ENCODE measurements at regions of chr2 and their contacts with region 1.

Region 1: DNA sequence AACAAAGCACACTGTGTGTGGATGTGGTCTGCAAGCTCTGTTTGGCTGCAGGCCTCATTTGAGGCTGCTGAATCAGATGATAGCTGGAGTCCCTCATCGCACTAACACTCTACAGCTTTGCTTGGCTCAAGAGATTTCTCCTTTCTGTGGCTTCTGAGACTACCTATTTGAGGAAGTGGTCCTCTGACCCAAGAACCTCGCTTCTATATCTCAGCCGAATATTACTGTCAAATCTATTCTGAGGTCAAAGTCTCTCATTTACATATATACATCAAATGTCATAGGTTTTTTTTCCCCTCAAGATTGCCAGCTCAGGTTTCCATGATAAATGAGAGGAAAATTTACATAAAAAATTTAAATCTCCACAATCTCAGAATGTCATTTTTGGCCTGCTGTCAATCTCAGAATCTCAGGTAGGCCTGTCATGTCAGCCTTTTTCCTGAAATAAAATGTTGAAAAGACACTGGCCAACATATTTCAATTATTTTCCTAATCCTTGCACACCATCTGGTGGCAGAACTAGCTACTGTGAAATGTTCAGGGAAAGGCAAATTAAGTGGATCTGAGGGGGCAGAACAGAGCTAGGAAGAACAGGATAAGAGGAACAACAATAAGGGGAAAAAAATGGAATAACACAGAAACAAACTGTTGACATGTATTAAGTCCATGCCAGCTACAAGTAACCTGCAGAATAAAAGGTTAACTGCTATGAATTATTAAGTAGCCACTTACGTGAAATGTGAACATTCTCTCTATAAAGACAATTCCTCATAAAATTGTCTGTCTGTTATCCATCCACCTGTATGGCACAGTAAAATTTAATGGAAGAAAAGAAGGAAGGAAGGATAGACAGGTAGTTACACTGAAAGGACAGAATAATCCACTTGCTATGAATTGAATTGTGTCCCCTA is 39.3 kb downstream of the AP1S3 start:
- DNase-seq: peak in 2 of 10 donors; percentile 7 to 12
- H3K4me3 ChIP-seq: no peak overlapping the region
- H3K27ac ChIP-seq: no peak overlapping the region
- H3K27me3 ChIP-seq: no peaks in the 10 kb centered on the region
- CTCF ChIP-seq: peak; percentile 55 to 87 (median 75)

Region 2: GRCh38 chr2:222976521-222977076 is 821.5 kb before region 1 on chr2:
- intact Hi-C with region 1: loop called (anchors 2 to 5 kb)
- DNase-seq: no peak
- H3K4me3 ChIP-seq: no peak overlapping the region
- H3K27ac ChIP-seq: no peak overlapping the region
- H3K27me3 ChIP-seq: no peaks in the 10 kb centered on the region
- CTCF ChIP-seq: no peak

Region 3: GRCh38 chr2:223692191-223692947 is 105.7 kb before region 1 on chr2:
- intact Hi-C with region 1: loop called in 1 of 2 experiments (anchors 5 kb)
- DNase-seq: peak in 8 of 10 donors; percentile 7 to 52 (median 40)
- H3K4me3 ChIP-seq: peak overlapping the region in 1 of 59 donors; percentile 24
- H3K27ac ChIP-seq: no peak overlapping the region
- H3K27me3 ChIP-seq: no peaks in the 10 kb centered on the region
- CTCF ChIP-seq: peak in 55 of 56 donors; percentile 31 to 78 (median 58)

Region 4: GRCh38 chr2:223727562-223727961 is 70.5 kb before region 1 on chr2:
- intact Hi-C with region 1: loop called in 1 of 2 experiments (anchors 5 kb)
- DNase-seq: peak in 1 of 10 donors; percentile 5
- H3K4me3 ChIP-seq: no peak overlapping the region
- H3K27ac ChIP-seq: no peak overlapping the region
- H3K27me3 ChIP-seq: no peaks in the 10 kb centered on the region
- CTCF ChIP-seq: peak in 52 of 56 donors; percentile 16 to 66 (median 50)

Region 5: GRCh38 chr2:223751012-223751411 is 47.1 kb before region 1 on chr2:
- intact Hi-C with region 1: no loop called
- DNase-seq: no peak
- H3K4me3 ChIP-seq: no peak overlapping the region
- H3K27ac ChIP-seq: no peak overlapping the region
- H3K27me3 ChIP-seq: peaks cover 0 to 6% (median 0%) of the 10 kb centered on the region in 45 donors
- CTCF ChIP-seq: no peak

Region 6: DNA sequence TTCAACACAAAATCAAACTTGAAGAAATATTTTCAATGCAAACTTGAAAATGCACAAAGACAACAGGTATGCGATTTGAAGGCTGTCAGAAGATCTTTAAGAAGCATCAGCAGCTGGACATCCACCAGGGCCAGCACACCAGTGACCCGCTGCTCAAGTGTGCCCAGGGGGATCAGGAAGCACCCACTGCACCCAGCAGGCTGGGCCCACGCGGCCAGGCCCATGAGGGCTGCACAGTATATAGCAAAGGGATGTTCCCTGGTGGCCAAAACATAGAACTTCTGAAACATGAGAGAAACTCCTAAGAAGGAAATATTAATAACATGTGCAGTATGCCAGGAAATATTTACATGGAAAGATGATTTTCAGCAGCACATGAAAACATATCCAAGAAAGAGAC is 122.0 kb after region 1 on chr2:
- intact Hi-C with region 1: no loop called
- DNase-seq: no peak
- H3K4me3 ChIP-seq: no peak overlapping the region
- H3K27ac ChIP-seq: no peak overlapping the region
- H3K27me3 ChIP-seq: no peaks in the 10 kb centered on the region
- CTCF ChIP-seq: peak in 9 of 56 donors; percentile 6 to 31 (median 21)

Measured in dorsolateral prefrontal cortex (tissue), 120 donors.